ENCODE measurements at regions of chr2 and their contacts with region 1.

Region 1: DNA sequence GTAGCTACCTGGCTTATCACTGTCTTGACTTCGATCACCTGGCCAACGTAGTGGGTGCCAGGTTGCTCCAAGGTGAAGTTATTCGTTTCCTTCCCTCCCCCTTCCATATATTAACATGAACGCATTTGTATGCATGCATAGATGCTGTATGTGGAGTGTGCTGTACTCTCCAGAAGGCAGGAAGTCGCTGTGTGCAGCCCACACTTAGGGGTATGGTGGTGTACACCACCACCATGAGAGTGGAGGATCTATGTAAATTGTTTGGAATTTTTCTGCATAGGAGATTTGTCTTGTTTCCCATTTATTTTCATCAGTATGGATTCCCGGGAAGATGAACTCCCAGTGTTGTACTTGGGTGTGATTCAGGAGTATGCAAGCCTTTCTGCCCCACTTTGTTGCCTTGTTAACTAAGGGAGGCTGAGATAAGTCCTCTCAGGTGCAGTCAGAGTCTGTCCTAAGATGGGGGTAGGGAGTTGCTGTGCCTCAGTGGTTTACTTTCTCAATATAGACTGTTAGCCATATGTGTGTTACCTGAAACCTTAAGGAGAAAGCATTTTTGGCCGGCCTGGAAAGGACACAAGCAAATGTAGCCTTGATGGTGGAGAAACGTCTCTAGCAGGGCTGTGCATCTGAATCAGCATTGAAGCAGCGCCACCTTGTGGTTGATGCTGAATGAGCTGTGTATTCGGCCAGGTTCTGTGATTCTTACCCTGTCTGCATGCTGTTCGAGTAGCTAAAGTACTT is 149.8 kb downstream of the TANC1 start:
- DNase-seq: peak; percentile 88
- H3K4me3 Mint-ChIP-seq: no peak overlapping the region
- H3K27ac Mint-ChIP-seq: no peak overlapping the region
- H3K4me1 Mint-ChIP-seq: peaks cover 18% of the 10 kb centered on the region
- H3K27me3 Mint-ChIP-seq: no peaks in the 10 kb centered on the region
- CTCF ChIP-seq: peak; percentile 76

Region 2: GRCh38 chr2:158903711-158904443 is 214.4 kb before region 1 on chr2:
- CTCF ChIA-PET with region 1: interaction called, 42 read pairs
- POLR2A ChIA-PET with region 1: interaction called, 6 read pairs
- intact Hi-C with region 1: loop called (anchors 1 kb)
- DNase-seq: no peak
- H3K4me3 Mint-ChIP-seq: no peak overlapping the region
- H3K27ac Mint-ChIP-seq: no peak overlapping the region
- H3K4me1 Mint-ChIP-seq: no peaks in the 10 kb centered on the region
- H3K27me3 Mint-ChIP-seq: no peaks in the 10 kb centered on the region
- CTCF ChIP-seq: no peak

Region 3: DNA sequence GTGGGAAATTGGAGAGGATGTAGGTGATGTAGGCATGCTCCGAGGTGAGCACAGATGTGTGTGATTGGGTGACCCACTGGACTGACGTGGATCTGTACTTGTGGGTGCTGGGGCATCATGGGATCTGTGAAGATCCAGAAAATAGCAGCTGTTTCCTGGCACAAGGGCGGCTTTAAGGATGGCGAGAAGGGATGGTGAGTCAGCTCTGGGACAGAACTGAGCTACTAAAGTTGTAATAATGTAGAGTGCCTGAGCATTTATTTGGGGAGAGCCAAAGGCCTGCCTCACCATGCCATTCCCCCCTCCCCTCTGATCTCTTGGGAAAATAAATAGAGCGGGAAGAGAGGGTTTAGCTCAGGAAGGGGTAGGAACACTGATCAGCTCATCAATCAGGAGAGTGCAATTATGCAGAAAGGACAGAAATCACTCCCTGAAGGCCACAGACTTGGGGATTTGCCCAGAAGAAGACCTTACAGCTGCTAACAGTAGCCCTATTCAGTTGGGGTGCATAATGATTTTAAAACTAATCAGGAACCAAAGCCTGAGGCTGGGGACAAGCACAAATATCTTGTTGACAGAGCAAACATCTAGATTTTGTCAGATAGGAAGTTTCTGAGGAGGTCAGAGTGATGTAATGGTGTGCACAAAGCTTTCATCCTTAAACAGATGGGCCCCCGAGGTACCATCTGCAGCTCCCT is 119.6 kb before region 1 on chr2:
- CTCF ChIA-PET with region 1: interaction called, 10 read pairs
- POLR2A ChIA-PET with region 1: no interaction called
- intact Hi-C with region 1: no loop called
- DNase-seq: peak; percentile 70
- H3K4me3 Mint-ChIP-seq: peak overlapping the region; percentile 28
- H3K27ac Mint-ChIP-seq: peak overlapping the region; percentile 83
- H3K4me1 Mint-ChIP-seq: peaks cover 18% of the 10 kb centered on the region
- H3K27me3 Mint-ChIP-seq: no peaks in the 10 kb centered on the region
- CTCF ChIP-seq: no peak

Region 4: DNA sequence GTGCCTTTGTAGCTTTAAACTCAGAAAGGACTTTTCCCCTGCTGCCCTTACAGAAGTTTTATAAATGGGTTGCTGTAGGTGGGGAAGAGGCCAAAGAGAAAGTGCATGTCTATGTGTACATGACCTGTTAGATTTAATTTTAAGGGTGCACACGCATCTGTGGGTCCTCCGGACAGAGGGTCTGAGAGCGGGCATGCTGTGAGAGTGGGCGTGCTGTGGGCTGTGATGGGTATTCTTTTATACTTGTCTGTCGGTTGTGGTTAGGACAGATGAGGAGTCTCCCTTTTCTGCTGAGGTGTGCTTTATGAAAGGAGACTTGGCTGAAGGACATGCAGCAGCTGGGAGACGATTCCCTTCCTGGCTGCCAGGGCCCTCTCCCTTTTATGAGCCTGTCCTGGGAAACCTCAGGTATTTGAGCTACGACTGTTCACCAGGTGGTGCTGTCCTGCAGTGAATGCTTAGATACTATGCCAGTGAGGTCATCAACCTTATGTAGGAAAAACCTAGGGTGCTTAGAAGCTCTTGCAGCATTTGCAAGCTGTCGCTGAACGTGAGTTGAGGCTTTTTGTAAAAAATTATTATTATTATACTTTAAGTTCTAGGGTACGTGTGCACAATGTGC is 82.4 kb before region 1 on chr2:
- CTCF ChIA-PET with region 1: interaction called, 196 read pairs
- POLR2A ChIA-PET with region 1: interaction called, 13 read pairs
- intact Hi-C with region 1: loop called (anchors 1 kb)
- DNase-seq: peak; percentile 73
- H3K4me3 Mint-ChIP-seq: no peak overlapping the region
- H3K27ac Mint-ChIP-seq: no peak overlapping the region
- H3K4me1 Mint-ChIP-seq: peaks cover 33% of the 10 kb centered on the region
- H3K27me3 Mint-ChIP-seq: no peaks in the 10 kb centered on the region
- CTCF ChIP-seq: peak; percentile 53

Region 5: GRCh38 chr2:159064446-159065301 is 53.6 kb before region 1 on chr2:
- CTCF ChIA-PET with region 1: interaction called, 14 read pairs
- POLR2A ChIA-PET with region 1: interaction called, 3 read pairs
- intact Hi-C with region 1: no loop called
- DNase-seq: peak; percentile 60
- H3K4me3 Mint-ChIP-seq: no peak overlapping the region
- H3K27ac Mint-ChIP-seq: peak overlapping the region; percentile 63
- H3K4me1 Mint-ChIP-seq: peaks cover 20% of the 10 kb centered on the region
- H3K27me3 Mint-ChIP-seq: no peaks in the 10 kb centered on the region
- CTCF ChIP-seq: no peak

Region 6: DNA sequence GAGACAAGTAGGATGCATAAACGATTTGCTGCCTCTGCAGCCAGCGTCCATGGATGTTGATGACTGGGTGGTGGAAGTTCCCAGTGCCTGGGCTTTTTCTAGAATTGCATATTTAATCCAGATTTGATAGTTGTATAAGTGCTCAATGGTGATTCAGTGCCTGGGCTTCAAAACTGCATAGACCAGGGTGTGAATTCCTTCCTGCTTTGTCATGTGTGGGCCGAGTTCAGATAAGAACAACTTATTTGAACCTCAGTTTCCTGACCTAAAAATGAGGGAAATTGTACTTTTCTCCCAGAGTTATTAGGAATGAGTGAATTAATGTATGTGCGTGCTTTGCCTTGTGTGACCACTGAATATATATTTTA is 13.6 kb after region 1 on chr2:
- CTCF ChIA-PET with region 1: interaction called, 18 read pairs
- POLR2A ChIA-PET with region 1: no interaction called
- intact Hi-C with region 1: no loop called
- DNase-seq: peak; percentile 63
- H3K4me3 Mint-ChIP-seq: no peak overlapping the region
- H3K27ac Mint-ChIP-seq: peak overlapping the region; percentile 82
- H3K4me1 Mint-ChIP-seq: peaks cover 33% of the 10 kb centered on the region
- H3K27me3 Mint-ChIP-seq: no peaks in the 10 kb centered on the region
- CTCF ChIP-seq: no peak

Region 7: DNA sequence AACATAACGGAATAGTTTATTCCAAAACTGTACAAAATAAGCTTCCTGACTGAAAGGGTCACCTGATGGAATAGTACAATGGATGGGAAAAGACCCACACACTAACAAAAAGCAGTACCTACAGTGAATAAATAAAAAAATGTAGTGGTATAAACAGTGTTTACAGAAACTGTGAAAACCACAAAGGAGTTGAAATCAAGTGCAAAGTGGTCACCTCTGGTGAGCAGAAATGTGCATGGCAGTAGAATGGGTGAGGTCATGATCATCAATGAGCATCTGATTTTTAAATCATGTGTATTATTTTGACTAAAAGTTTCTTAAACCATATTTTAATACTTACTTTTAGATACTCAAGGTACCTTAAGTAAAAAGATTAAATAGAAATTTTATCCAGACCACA is 156.8 kb after region 1 on chr2:
- CTCF ChIA-PET with region 1: no interaction called
- POLR2A ChIA-PET with region 1: no interaction called
- intact Hi-C with region 1: no loop called
- DNase-seq: no peak
- H3K4me3 Mint-ChIP-seq: no peak overlapping the region
- H3K27ac Mint-ChIP-seq: no peak overlapping the region
- H3K4me1 Mint-ChIP-seq: no peaks in the 10 kb centered on the region
- H3K27me3 Mint-ChIP-seq: no peaks in the 10 kb centered on the region
- CTCF ChIP-seq: no peak

Region 8: DNA sequence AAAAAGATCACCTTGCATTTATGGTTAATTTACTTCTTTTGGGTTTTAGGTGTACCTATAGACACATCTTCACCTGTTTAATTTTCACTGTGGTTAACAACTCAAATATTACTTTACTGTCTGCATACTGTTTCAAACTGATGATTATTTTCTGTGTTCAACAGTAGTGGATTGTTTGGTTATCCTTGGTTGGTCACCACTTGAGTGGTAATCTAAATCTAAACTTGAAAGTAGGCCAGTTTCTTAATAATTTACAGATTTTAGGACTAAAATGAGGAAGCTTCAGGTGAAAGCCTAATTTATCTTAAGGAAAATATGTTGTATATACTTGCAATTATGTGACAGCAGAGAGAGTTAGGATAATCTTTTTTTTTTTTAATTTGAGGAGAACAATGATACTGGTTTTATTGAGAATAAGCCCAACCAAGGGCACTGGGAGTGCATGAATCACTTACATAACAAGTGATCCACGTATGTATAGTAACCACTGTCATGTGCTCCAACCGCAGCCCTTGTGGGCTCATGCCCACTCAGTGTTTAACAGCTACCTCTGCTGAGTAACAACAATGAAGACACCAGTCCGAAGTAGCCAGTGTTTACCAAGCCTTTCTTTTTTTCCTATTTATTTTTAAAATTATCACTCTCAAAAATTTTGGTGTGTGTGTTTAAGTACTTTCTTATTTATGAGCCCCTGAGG is 199.3 kb after region 1 on chr2:
- CTCF ChIA-PET with region 1: no interaction called
- POLR2A ChIA-PET with region 1: no interaction called
- intact Hi-C with region 1: no loop called
- DNase-seq: no peak
- H3K4me3 Mint-ChIP-seq: no peak overlapping the region
- H3K27ac Mint-ChIP-seq: peak overlapping the region; percentile 46
- H3K4me1 Mint-ChIP-seq: no peaks in the 10 kb centered on the region
- H3K27me3 Mint-ChIP-seq: no peaks in the 10 kb centered on the region
- CTCF ChIP-seq: no peak

Measured in MCF 10A (cell line).